GM10248 (cell line): ENCODE measurements at regions of chr9 and their contacts with region 1.

Region 1: GRCh38 chr9:107340920-107341632 is 58.0 kb downstream of the RAD23B start:
- DNase-seq: peak; percentile 85
- CTCF ChIP-seq: peak; percentile 92

Region 2: GRCh38 chr9:105425841-105426436 is 1915.1 kb before region 1 on chr9:
- CTCF ChIA-PET with region 1: no interaction called
- POLR2A ChIA-PET with region 1: no interaction called
- DNase-seq: peak; percentile 47
- CTCF ChIP-seq: peak; percentile 43

Region 3: DNA sequence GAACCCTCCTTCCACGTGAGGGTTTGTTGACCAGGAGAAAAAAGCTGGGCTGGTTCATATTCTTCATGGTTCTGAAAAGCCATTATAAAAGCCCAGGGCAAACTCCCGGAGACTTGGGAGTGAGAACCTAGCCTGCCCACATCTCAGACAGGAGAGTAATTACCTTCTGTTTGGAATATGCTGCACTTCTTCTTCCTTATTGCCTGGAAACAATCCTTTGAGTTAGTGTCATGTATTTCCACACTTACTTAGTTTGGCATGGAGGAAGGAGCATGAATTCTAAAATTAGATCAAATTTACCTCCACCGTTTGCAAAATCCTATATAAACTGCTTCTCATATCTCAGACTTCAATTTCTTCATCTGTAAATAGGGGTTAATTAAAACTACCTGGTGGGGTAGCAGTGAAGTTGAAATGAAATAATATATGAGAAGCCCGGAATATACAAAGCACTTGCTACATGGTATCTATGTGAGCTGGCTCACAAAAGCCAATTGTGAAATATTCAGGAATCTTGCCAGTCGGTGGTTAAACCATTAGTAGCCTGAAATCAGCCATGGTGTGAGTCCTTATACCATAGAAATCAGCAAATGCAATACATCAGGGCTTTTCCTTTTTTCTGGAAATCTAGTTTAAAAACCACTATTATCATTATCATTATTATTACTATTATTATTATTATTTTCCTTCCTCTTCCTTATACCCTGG is 198.0 kb before region 1 on chr9:
- CTCF ChIA-PET with region 1: no interaction called
- POLR2A ChIA-PET with region 1: no interaction called
- DNase-seq: no peak
- CTCF ChIP-seq: no peak

Region 4: GRCh38 chr9:107213561-107214028 is 127.5 kb before region 1 on chr9:
- CTCF ChIA-PET with region 1: no interaction called
- POLR2A ChIA-PET with region 1: no interaction called
- DNase-seq: peak; percentile 45
- CTCF ChIP-seq: no peak

Region 5: GRCh38 chr9:107260437-107261086 is 80.5 kb before region 1 on chr9:
- CTCF ChIA-PET with region 1: interaction called, 32 read pairs
- POLR2A ChIA-PET with region 1: no interaction called
- DNase-seq: peak; percentile 74
- CTCF ChIP-seq: no peak

Region 6: GRCh38 chr9:107282753-107283625 is 58.1 kb before region 1 on chr9 and contains the start of gene RAD23B:
- CTCF ChIA-PET with region 1: interaction called, 11 read pairs
- POLR2A ChIA-PET with region 1: no interaction called
- DNase-seq: peak; percentile 97
- CTCF ChIP-seq: no peak

Region 7: GRCh38 chr9:107312376-107313050 is 28.6 kb before region 1 on chr9:
- CTCF ChIA-PET with region 1: interaction called, 38 read pairs
- POLR2A ChIA-PET with region 1: no interaction called
- DNase-seq: no peak
- CTCF ChIP-seq: no peak

Region 8: GRCh38 chr9:107351382-107352045 is 10.4 kb after region 1 on chr9:
- CTCF ChIA-PET with region 1: interaction called, 65 read pairs
- POLR2A ChIA-PET with region 1: interaction called, 3 read pairs
- DNase-seq: no peak
- CTCF ChIP-seq: no peak

Region 9: DNA sequence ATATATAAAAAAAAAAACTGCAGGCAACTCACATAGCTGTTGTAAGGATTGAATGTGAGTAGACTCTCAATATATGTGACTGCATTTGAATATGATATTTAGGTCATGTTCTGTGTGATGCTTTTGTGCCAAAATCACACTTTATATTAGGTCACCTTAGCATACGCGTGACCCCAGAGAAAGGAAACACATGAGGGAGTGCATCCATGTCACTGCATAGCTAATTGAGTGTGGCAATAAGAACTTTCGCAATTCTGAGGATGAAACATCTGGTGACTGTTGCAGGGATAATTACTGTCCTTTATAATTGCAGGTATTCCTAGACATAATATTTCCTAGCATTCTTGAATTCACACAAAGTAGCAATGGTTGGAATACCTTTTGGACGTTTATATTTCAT is 608.0 kb after region 1 on chr9:
- CTCF ChIA-PET with region 1: no interaction called
- POLR2A ChIA-PET with region 1: no interaction called
- DNase-seq: no peak
- CTCF ChIP-seq: no peak